ENCODE measurements at regions of chr17 and their contacts with region 1.

Region 1: DNA sequence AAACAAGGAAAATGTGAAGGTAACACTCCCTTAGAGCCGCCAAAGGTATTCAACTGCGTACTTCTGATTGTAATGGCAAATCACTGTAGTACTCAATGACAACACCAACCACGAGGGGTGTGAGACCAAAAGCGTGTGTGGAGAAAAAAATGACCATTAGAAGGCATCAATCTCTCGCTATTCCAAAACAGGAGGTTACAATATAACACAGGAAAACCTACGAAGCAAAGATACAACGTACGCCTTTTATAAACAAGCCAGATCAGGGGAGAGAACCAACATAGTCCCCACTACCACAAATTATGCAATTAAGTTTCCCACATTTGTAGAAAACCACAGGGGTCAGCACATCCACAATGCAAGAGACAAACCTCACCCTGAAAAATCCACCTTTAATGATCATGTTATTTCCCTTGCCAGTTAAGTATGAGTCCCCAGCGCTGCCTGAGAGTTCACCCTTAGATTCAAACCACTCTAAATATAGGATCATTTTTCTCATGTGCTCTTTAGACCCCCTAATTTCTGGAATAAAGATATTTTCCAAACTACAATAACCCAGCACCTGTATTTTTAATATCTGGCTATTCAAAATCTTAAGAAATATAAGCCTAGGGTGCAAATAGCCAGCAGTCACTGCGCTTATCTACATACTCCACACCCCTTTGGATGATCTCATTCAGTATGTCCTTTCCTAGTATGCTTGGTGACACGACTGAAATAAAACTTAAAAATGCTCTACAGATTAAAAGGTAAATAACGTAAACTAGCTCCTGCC is 12.4 kb downstream of the TEX14 start:
- DNase-seq: peak; percentile 62 to 93 (median 75)
- ATAC-seq: peak; percentile 96
- H3K4me3 ChIP-seq: no peak overlapping the region
- H3K27ac ChIP-seq: peak overlapping the region; percentile 92
- H3K4me1 ChIP-seq: peaks cover 0 to 3% of the 10 kb centered on the region in 2 experiments; a peak in 2 of 5 replicates
- H3K27me3 ChIP-seq: no peaks in the 10 kb centered on the region
- CTCF ChIP-seq: peak; percentile 14 to 33 (median 30); a peak in 2 of 6 replicates
- EP300 ChIP-seq: peak; percentile 84
- POLR2A ChIP-seq: peak; percentile 100
- RAD21 ChIP-seq: peak; percentile 28 to 81; a peak in 3 of 4 replicates

Region 2: GRCh38 chr17:58666858-58667619 is 12.4 kb before region 1 on chr17:
- CTCF ChIA-PET with region 1: no interaction called
- POLR2A ChIA-PET with region 1: interaction called, 40 read pairs
- in situ Hi-C with region 1: no loop called
- intact Hi-C with region 1: loop called (anchors 1 kb)
- DNase-seq: peak; percentile 76 to 95 (median 78)
- ATAC-seq: peak; percentile 88
- H3K4me3 ChIP-seq: peak overlapping the region; percentile 25
- H3K27ac ChIP-seq: peak overlapping the region; percentile 81
- H3K4me1 ChIP-seq: peaks cover 15 to 26% of the 10 kb centered on the region in 2 experiments
- H3K27me3 ChIP-seq: no peaks in the 10 kb centered on the region
- CTCF ChIP-seq: no peak
- EP300 ChIP-seq: no peak
- POLR2A ChIP-seq: no peak
- RAD21 ChIP-seq: no peak

Region 3: GRCh38 chr17:58692239-58693055 is 13.0 kb after region 1 on chr17 and contains the start of gene RAD51C:
- CTCF ChIA-PET with region 1: interaction called, 3 read pairs
- POLR2A ChIA-PET with region 1: interaction called, 13 read pairs
- in situ Hi-C with region 1: no loop called
- intact Hi-C with region 1: no loop called
- DNase-seq: peak; percentile 90 to 97 (median 91)
- ATAC-seq: peak; percentile 96
- H3K4me3 ChIP-seq: peak within 1 kb of the TSS; percentile 52
- H3K27ac ChIP-seq: peak within 1 kb of the TSS; percentile 87
- H3K4me1 ChIP-seq: peaks cover 6% of the 10 kb centered on the region in 2 experiments
- H3K27me3 ChIP-seq: no peaks in the 10 kb centered on the region
- CTCF ChIP-seq: no peak
- EP300 ChIP-seq: peak; percentile 8; the same call in 1 of the 2 replicates
- POLR2A ChIP-seq: peak; percentile 95
- RAD21 ChIP-seq: no peak
- polyA plus RNA-seq, gene RAD51C: 341 TPM

Measured in K562 (cell line).